Testis (tissue), 5 donors: ENCODE measurements at regions of chr13 and their contacts with region 1.

Region 1: GRCh38 chr13:33542283-33543088 is 256.9 kb upstream of the STARD13 start:
- DNase-seq: peak; percentile 97
- H3K4me3 ChIP-seq: peak overlapping the region; percentile 55 to 69
- H3K27ac ChIP-seq: peak overlapping the region; percentile 93 to 98
- H3K4me1 ChIP-seq: peaks cover 19% of the 10 kb centered on the region
- H3K27me3 ChIP-seq: no peaks in the 10 kb centered on the region
- CTCF ChIP-seq: peak; percentile 84 to 96 (median 91)
- POLR2A ChIP-seq: peak; percentile 63

Region 2: GRCh38 chr13:32586080-32586900 is 956.2 kb before region 1 on chr13 and contains the start of gene PDS5B:
- intact Hi-C with region 1: loop called (anchors 5 kb)
- DNase-seq: peak; percentile 95
- H3K4me3 ChIP-seq: peak within 1 kb of the TSS; percentile 80 to 91
- H3K27ac ChIP-seq: peak within 1 kb of the TSS; percentile 98 to 99
- H3K4me1 ChIP-seq: peaks cover 8% of the 10 kb centered on the region
- H3K27me3 ChIP-seq: no peaks in the 10 kb centered on the region
- CTCF ChIP-seq: peak; percentile 90 to 99 (median 98)
- POLR2A ChIP-seq: no peak
- total RNA-seq, gene PDS5B: 46.3 to 52.4 TPM

Region 3: DNA sequence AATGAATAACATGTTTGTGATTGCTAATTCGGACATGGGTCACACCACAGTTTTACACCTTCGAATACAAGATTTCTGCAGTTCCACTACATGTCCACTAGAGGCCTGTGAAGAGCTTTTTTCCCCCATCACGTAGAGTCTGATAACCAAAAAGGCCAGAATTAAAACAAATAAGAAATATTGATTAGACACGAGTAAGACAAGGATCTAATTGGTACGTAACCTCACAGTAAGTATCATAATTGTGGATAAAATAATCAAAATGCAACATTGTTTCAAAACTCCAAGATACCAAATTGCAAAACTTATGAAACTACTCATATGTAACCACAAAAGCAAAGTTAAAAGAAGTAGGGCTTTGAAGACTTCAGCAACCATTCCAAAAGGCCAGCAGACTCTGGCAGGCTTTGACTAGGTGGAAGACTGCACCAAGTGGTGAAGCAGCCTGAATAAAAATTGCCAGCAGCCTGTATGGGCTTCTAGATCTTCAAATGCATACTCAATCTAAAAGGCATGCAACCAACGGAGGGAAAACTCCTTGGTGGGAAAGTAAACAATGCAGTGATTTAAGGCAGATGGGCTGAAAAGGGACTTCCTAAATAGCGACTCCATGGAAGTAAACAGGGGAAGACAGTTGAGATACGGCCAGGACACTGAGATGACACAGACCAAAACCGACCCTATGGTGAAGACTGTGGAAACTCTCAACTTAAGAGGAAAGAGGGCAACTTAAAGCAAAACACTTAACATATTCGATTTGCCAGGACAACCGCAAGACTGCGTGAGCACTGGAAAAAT is 313.6 kb before region 1 on chr13:
- intact Hi-C with region 1: loop called (anchors 5 kb)
- DNase-seq: no peak
- H3K4me3 ChIP-seq: no peak overlapping the region
- H3K27ac ChIP-seq: peak overlapping the region; percentile 47 to 72
- H3K4me1 ChIP-seq: peaks cover 25% of the 10 kb centered on the region
- H3K27me3 ChIP-seq: no peaks in the 10 kb centered on the region
- CTCF ChIP-seq: peak; percentile 86 to 91 (median 89)
- POLR2A ChIP-seq: no peak

Region 4: GRCh38 chr13:33642374-33643068 is 100.0 kb after region 1 on chr13:
- intact Hi-C with region 1: loop called (anchors 10 kb)
- DNase-seq: peak; percentile 68
- H3K4me3 ChIP-seq: no peak overlapping the region
- H3K27ac ChIP-seq: peak overlapping the region in 1 of 2 donors; percentile 42
- H3K4me1 ChIP-seq: peaks cover 38% of the 10 kb centered on the region
- H3K27me3 ChIP-seq: no peaks in the 10 kb centered on the region
- CTCF ChIP-seq: no peak
- POLR2A ChIP-seq: no peak

Region 5: GRCh38 chr13:33723772-33724435 is 181.4 kb after region 1 on chr13:
- intact Hi-C with region 1: loop called (anchors 5 kb)
- DNase-seq: peak; percentile 92
- H3K4me3 ChIP-seq: no peak overlapping the region
- H3K27ac ChIP-seq: peak overlapping the region in 1 of 2 donors; percentile 75
- H3K4me1 ChIP-seq: peaks cover 13% of the 10 kb centered on the region
- H3K27me3 ChIP-seq: no peaks in the 10 kb centered on the region
- CTCF ChIP-seq: peak; percentile 64 to 81 (median 65)
- POLR2A ChIP-seq: no peak

Region 6: DNA sequence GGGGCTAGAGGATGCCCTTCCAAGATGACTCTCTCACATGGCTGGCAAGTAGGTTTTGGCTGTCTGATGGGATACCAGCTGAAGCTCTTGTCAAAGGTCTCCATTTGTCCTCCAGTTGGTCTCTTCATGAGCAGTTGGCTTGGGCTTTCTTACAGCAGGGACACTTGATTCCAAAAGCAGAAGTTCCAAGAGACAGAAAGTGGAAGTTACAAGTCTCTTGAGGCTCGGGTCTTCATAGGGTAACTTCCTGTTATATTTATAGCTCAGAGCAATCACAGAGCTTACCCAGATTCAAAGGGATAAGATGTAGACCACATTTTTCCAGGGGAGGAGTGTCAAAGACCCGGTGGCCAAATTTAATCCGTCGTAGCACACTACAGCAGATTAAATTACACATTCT is 715.5 kb after region 1 on chr13:
- intact Hi-C with region 1: no loop called
- DNase-seq: no peak
- H3K4me3 ChIP-seq: no peak overlapping the region
- H3K27ac ChIP-seq: no peak overlapping the region
- H3K4me1 ChIP-seq: no peaks in the 10 kb centered on the region
- H3K27me3 ChIP-seq: no peaks in the 10 kb centered on the region
- CTCF ChIP-seq: no peak
- POLR2A ChIP-seq: no peak